ENCODE measurements at regions of chr12 and their contacts with region 1.

Region 1: GRCh38 chr12:105523164-105524015 is 192.9 kb downstream of the C12orf75 start:
- DNase-seq: peak; percentile 66 to 93
- H3K4me3 ChIP-seq: no peak overlapping the region
- H3K27ac ChIP-seq: peak overlapping the region; percentile 52 to 61
- H3K4me1 ChIP-seq: peaks cover 0 to 20% of the 10 kb centered on the region in 2 donors
- H3K27me3 ChIP-seq: no peaks in the 10 kb centered on the region
- CTCF ChIP-seq: no peak

Region 2: GRCh38 chr12:105562199-105562971 is 39.0 kb after region 1 on chr12:
- intact Hi-C with region 1: loop called (anchors 2 kb)
- DNase-seq: peak; percentile 28 to 82
- H3K4me3 ChIP-seq: peak overlapping the region in 1 of 2 donors; percentile 38
- H3K27ac ChIP-seq: peak overlapping the region; percentile 52 to 75
- H3K4me1 ChIP-seq: peaks cover 0 to 10% of the 10 kb centered on the region in 2 donors
- H3K27me3 ChIP-seq: no peaks in the 10 kb centered on the region
- CTCF ChIP-seq: no peak